ENCODE measurements at regions of chr6 and their contacts with region 1.

Region 1: DNA sequence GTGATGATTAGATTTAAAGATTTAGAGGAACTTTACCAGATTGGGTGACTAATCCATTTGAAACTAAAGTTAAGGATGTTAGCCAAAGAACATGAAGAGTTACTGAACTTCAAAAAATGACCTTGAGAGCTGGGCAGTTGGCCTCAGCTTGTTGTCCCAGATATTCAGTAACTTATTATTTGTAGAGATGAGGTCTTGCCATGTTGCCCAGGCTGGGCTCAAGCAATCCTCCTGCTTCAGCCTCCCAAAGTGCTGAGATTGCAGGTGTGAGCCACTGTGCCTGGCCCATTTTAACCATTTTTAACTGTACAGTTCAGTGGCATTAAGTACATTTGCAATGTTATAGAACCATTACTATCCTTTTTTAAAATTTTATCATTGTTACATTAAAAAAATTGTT is 161.5 kb downstream of the SLC16A10 start:
- DNase-seq: no peak
- H3K4me3 ChIP-seq: no peak overlapping the region
- H3K27me3 ChIP-seq: no peaks in the 10 kb centered on the region
- CTCF ChIP-seq: no peak

Region 2: DNA sequence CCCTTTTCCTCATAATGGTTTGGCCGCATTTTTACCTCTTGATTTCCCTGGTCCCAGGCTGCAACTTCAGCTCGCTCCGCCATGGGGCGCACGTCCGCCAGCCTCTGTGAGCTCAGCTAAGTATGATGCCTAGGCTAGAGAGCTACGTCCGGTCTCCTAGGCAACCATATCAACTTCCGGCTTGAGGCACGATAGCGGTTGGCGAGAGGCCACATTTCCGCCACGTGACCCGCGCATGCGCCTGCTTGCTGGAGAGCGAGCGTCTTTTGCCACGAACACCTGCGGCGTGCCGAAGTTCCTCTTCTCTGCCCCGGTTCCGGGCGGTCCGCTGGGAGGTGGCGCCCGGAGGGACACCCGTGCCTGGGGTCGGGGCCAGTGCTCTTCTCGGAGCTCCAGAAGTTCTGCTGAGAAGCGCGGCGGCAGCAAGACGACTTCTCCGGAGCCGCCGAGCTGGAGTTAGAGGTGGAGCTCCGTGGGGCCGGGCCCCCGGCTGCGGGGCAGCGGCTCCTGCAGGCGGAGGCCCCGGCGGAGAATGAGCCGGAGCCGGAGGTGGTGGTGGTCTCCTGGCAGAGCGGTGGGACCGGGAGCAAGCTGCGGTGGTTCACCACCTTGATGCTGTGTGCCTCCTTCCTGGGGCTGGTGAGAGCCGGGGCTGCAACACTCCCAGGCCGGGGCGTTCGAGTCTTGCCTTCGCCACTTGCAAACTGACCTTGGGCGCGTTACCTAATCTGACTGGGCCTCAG is 10.5 kb after region 1 on chr6:
- CTCF ChIA-PET with region 1: interaction called, 10 read pairs
- POLR2A ChIA-PET with region 1: no interaction called
- DNase-seq: peak; percentile 95
- H3K4me3 ChIP-seq: peak overlapping the region; percentile 74
- H3K27me3 ChIP-seq: peaks cover 2% of the 10 kb centered on the region; the same call in 1 of the 2 replicates
- CTCF ChIP-seq: peak; percentile 94

Measured in BJ (cell line).